ENCODE measurements at regions of chr5 and their contacts with region 1.

Region 1: DNA sequence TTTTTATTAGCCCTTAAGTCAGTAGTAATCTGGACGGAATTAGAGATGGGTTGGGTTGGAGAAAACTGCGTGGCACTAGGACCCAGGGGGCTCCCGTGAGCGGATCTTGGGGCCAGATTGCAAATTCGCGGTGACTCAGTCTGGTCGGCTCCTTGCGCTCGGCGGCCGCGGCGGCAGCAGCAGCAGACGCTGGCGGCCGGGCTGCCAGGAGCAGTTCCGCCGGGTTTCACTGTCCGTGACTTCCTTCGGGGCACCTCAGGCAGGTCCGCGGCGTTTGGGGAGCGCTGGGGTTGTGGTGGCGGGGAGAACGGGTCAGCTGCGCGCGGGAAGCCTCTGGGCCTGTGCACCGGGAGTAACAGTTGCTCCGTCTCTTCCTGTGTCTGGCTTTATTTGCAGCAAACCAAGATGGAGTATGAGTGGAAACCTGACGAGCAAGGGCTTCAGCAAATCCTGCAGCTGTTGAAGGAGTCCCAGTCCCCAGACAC is 31.6 kb downstream of the TNPO1 start:
- DNase-seq: peak; percentile 97

Region 2: GRCh38 chr5:72702871-72703434 is 145.1 kb before region 1 on chr5:
- intact Hi-C with region 1: no loop called
- DNase-seq: no peak

Region 3: GRCh38 chr5:72733810-72734209 is 114.2 kb before region 1 on chr5:
- intact Hi-C with region 1: no loop called
- DNase-seq: no peak

Region 4: DNA sequence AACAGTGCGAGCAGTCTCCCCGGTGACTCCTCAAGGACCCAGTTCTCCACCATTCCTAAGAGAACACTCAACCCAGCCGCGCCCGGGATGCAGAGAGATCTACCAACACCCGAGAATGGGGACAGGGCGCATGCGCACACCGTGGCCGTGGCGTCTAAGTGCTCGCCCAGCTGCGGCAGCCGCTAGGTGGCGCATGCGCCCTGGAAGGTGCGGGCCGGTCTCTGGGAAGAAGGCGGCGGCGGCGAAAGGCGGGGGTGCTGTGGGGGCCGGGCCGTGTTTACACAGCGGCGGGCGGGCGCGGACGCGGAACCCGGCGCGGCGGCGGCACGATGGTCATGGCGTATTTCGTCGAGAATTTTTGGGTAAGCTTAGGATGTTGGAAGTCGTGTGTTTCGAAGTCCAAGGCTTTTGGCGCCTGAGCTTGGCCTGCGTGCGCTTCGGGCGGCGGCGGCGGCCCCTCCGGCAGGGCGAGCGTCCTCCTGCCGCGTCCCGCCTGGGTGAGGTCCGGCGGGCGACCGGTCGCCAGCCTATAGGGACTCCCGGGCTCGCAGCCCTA is 107.8 kb after region 1 on chr5 and contains the start of gene FCHO2:
- intact Hi-C with region 1: loop called (anchors 5 kb)
- DNase-seq: peak; percentile 100
- total RNA-seq, gene FCHO2: 15.5 TPM